ENCODE measurements at regions of chrX and their contacts with region 1.

Region 1: DNA sequence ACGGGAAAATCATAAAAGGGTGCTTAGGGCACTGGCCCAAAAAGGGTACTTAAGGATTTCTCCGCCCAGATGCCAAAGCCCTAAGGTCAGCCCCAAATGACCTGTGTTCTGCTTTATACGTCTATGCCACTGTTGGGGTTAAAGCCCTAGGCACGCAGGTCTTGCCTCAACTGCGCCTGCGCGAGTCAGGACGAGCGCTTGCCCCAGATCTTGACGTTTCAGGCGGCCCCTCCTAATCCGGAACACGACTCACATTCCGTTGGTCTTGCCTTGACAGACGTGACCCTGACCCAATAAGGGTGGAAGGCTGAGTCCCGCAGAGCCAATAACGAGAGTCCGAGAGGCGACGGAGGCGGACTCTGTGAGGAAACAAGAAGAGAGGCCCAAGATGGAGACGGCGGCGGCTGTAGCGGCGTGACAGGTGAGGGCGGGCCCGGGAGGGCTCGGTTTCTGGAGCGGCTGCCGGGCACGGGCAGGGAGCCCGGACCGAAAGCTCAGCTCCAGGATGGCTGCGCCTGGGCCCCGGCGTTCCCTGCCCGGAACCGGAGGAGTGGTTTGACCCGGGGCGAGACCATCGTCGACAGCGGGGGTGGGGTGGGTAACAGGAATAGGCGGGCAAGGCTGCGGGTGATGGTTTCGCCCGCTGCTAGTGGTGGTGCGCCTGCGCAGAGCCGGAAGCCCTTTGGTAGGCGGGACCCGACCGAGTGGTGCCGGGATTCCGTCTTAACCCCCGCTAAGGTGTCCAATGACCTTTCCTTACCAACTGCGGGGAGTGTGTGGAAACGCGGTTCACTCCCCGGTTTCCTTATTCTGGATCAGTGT is at the start of gene ARAF:
- DNase-seq: peak; percentile 85 to 99 (median 92)
- ATAC-seq: peak; percentile 86
- H3K4me3 ChIP-seq: peak within 1 kb of the TSS; percentile 85
- H3K4me3 Mint-ChIP-seq: peak within 1 kb of the TSS; percentile 95
- H3K27ac ChIP-seq: peak within 1 kb of the TSS; percentile 79 to 96
- H3K27ac Mint-ChIP-seq: peak within 1 kb of the TSS; percentile 96
- H3K4me1 ChIP-seq: peaks cover 40% of the 10 kb centered on the region
- H3K4me1 Mint-ChIP-seq: peaks cover 51% of the 10 kb centered on the region
- H3K27me3 ChIP-seq: no peaks in the 10 kb centered on the region
- H3K27me3 Mint-ChIP-seq: no peaks in the 10 kb centered on the region
- CTCF ChIP-seq: no peak
- total RNA-seq, gene ARAF: 119 to 121 TPM

Region 2: DNA sequence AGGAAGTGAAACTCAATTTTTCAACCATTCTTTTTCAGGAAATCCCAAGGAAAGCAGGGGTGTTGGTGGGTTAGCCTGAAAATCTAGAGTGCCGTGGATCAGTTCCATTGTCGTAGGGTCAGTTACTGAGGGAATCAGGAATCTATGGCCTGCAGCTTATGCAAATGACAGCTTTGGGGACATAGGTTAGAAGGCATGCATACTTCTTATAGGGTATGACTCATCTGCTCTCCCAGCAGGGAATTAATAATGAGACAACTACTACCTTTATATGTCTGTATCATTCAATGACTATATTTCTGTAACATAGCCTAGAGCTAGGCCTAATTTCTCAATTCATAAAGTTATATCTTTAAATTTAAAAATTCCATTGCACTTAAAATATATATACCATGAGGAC is 114.6 kb before region 1 on chrX:
- CTCF ChIA-PET with region 1: no interaction called
- POLR2A ChIA-PET with region 1: no interaction called
- intact Hi-C with region 1: no loop called
- DNase-seq: no peak
- ATAC-seq: no peak
- H3K4me3 ChIP-seq: no peak overlapping the region
- H3K4me3 Mint-ChIP-seq: no peak overlapping the region
- H3K27ac ChIP-seq: no peak overlapping the region
- H3K27ac Mint-ChIP-seq: no peak overlapping the region
- H3K4me1 ChIP-seq: no peaks in the 10 kb centered on the region
- H3K4me1 Mint-ChIP-seq: no peaks in the 10 kb centered on the region
- H3K27me3 ChIP-seq: no peaks in the 10 kb centered on the region
- H3K27me3 Mint-ChIP-seq: no peaks in the 10 kb centered on the region
- CTCF ChIP-seq: no peak

Region 3: GRCh38 chrX:47482512-47483309 is 78.3 kb before region 1 on chrX and contains the start of gene ZNF41:
- CTCF ChIA-PET with region 1: no interaction called
- POLR2A ChIA-PET with region 1: interaction called, 4 read pairs
- intact Hi-C with region 1: loop called (anchors 5 kb)
- DNase-seq: peak; percentile 52 to 93 (median 74)
- ATAC-seq: peak; percentile 81
- H3K4me3 ChIP-seq: peak within 1 kb of the TSS; percentile 88
- H3K4me3 Mint-ChIP-seq: peak within 1 kb of the TSS; percentile 96
- H3K27ac ChIP-seq: peak within 1 kb of the TSS; percentile 84
- H3K27ac Mint-ChIP-seq: peak within 1 kb of the TSS; percentile 94
- H3K4me1 ChIP-seq: peaks cover 21% of the 10 kb centered on the region
- H3K4me1 Mint-ChIP-seq: peaks cover 45% of the 10 kb centered on the region
- H3K27me3 ChIP-seq: no peaks in the 10 kb centered on the region
- H3K27me3 Mint-ChIP-seq: no peaks in the 10 kb centered on the region
- CTCF ChIP-seq: no peak
- total RNA-seq, gene ZNF41: 3.1 to 3.9 TPM

Region 4: GRCh38 chrX:47619486-47620302 is 58.7 kb after region 1 on chrX and contains the start of gene SYN1:
- CTCF ChIA-PET with region 1: no interaction called
- POLR2A ChIA-PET with region 1: interaction called, 12 read pairs
- intact Hi-C with region 1: loop called in 1 of 2 experiments (anchors 5 kb)
- DNase-seq: peak; percentile 63 to 93 (median 77)
- ATAC-seq: peak; percentile 80
- H3K4me3 ChIP-seq: peak within 1 kb of the TSS; percentile 42
- H3K4me3 Mint-ChIP-seq: peak within 1 kb of the TSS; percentile 61
- H3K27ac ChIP-seq: no peak within 1 kb of the TSS
- H3K27ac Mint-ChIP-seq: no peak within 1 kb of the TSS
- H3K4me1 ChIP-seq: peaks cover 24% of the 10 kb centered on the region
- H3K4me1 Mint-ChIP-seq: peaks cover 28% of the 10 kb centered on the region
- H3K27me3 ChIP-seq: no peaks in the 10 kb centered on the region
- H3K27me3 Mint-ChIP-seq: no peaks in the 10 kb centered on the region
- CTCF ChIP-seq: no peak
- total RNA-seq, gene SYN1: 0.27 to 0.87 TPM

Region 5: DNA sequence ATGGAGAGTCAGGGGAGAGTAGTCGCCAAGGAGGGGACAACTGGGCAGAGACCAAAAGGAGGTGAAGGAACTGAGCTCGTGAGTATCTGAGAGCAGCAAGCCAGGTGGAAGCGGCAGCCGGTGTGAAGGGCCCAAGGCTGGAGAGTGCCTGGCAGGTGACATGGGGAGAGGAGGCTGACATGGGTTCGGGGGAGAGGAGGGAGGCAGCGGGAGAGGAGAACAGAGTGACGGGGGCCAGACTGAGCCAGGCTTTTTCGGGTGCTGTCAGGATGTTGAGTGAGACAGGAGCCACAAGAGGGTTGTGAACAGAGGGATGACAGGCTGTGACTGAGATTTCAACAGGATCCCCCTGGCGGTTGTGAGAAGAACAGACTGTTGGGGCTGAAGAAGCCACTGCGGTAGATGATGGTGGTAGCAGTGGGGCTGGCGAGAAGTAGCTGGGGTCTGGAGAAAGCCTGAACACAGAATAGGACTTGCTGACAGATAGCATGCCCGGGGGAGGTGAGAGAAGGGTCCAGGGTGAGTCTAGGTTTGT is 83.6 kb after region 1 on chrX:
- CTCF ChIA-PET with region 1: no interaction called
- POLR2A ChIA-PET with region 1: interaction called, 6 read pairs
- intact Hi-C with region 1: loop called in 1 of 2 experiments (anchors 2 kb)
- DNase-seq: peak in 3 of 14 experiments; percentile 24 to 48 (median 37)
- ATAC-seq: peak; percentile 61
- H3K4me3 ChIP-seq: no peak overlapping the region
- H3K4me3 Mint-ChIP-seq: no peak overlapping the region
- H3K27ac ChIP-seq: no peak overlapping the region
- H3K27ac Mint-ChIP-seq: peak overlapping the region; percentile 49
- H3K4me1 ChIP-seq: peaks cover 25% of the 10 kb centered on the region
- H3K4me1 Mint-ChIP-seq: peaks cover 44% of the 10 kb centered on the region
- H3K27me3 ChIP-seq: no peaks in the 10 kb centered on the region
- H3K27me3 Mint-ChIP-seq: no peaks in the 10 kb centered on the region
- CTCF ChIP-seq: no peak

Region 6: GRCh38 chrX:47650164-47651042 is 89.4 kb after region 1 on chrX and contains the start of gene ELK1:
- CTCF ChIA-PET with region 1: no interaction called
- POLR2A ChIA-PET with region 1: interaction called, 10 read pairs
- intact Hi-C with region 1: loop called (anchors 2 to 5 kb)
- DNase-seq: peak; percentile 75 to 96 (median 84)
- ATAC-seq: peak; percentile 88
- H3K4me3 ChIP-seq: peak within 1 kb of the TSS; percentile 83
- H3K4me3 Mint-ChIP-seq: peak within 1 kb of the TSS; percentile 94
- H3K27ac ChIP-seq: peak within 1 kb of the TSS; percentile 65 to 76
- H3K27ac Mint-ChIP-seq: peak within 1 kb of the TSS; percentile 89
- H3K4me1 ChIP-seq: peaks cover 29% of the 10 kb centered on the region
- H3K4me1 Mint-ChIP-seq: peaks cover 39% of the 10 kb centered on the region
- H3K27me3 ChIP-seq: no peaks in the 10 kb centered on the region
- H3K27me3 Mint-ChIP-seq: no peaks in the 10 kb centered on the region
- CTCF ChIP-seq: no peak
- total RNA-seq, gene ELK1: 38.9 to 40.5 TPM

Region 7: GRCh38 chrX:47751670-47752069 is 190.6 kb after region 1 on chrX:
- CTCF ChIA-PET with region 1: no interaction called
- POLR2A ChIA-PET with region 1: no interaction called
- intact Hi-C with region 1: loop called in 1 of 2 experiments (anchors 5 kb)
- DNase-seq: peak in 11 of 14 experiments; percentile 0 to 36 (median 13)
- ATAC-seq: no peak
- H3K4me3 ChIP-seq: no peak overlapping the region
- H3K4me3 Mint-ChIP-seq: no peak overlapping the region
- H3K27ac ChIP-seq: no peak overlapping the region
- H3K27ac Mint-ChIP-seq: no peak overlapping the region
- H3K4me1 ChIP-seq: no peaks in the 10 kb centered on the region
- H3K4me1 Mint-ChIP-seq: no peaks in the 10 kb centered on the region
- H3K27me3 ChIP-seq: no peaks in the 10 kb centered on the region
- H3K27me3 Mint-ChIP-seq: peaks cover 4% of the 10 kb centered on the region
- CTCF ChIP-seq: no peak